ENCODE measurements at regions of chr3 and their contacts with region 1.

Region 1: DNA sequence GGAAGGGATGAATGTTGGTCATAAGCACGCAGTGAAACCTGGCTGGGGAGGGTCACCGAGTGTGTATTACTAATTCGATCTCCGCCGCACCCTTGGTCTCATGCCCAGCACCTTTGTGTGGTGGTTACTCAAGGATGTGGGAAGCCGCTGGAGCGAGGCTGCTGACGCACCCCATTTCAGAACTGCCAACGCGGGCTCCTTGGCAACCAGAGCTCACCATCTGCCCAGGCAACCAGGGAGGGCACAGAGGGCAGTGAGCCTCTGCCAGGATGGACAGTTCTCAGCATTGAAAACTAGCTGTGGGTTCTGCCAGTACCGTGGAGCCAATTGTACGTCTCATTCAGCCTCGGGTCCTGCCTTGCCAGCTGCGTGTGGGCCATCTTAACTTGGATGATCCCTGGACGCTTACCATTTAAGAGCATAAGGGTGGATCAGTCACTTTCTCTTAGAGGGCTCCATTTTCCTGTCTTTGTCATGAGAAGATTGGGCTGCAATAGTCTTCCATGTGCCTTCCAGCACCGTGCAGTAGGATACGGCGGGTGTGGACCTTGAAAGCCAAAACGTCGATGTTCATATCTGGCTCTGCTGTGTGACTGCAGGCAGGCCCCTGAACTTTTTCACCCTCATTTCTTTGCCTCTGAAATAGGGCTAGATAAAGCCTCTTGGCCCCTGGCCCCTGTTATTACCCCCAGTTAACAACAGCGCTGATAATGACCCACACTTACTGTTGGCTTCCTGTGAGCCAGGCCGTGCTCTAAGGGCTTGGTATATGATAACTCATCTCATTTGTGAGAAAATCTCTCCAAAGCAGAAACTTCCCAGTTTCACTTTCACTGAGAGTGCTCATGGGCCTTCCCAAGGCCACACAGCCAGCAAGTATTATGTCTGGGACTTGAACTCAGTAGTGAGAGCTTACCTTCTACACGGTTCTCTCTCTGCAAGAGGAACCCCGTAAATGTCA is 238.8 kb downstream of the OPA1 start:
- DNase-seq: no peak
- ATAC-seq: no peak
- H3K4me3 ChIP-seq: no peak overlapping the region
- H3K27ac ChIP-seq: no peak overlapping the region
- H3K4me1 ChIP-seq: peaks cover 45% of the 10 kb centered on the region
- H3K27me3 ChIP-seq: no peaks in the 10 kb centered on the region
- CTCF ChIP-seq: no peak

Region 2: DNA sequence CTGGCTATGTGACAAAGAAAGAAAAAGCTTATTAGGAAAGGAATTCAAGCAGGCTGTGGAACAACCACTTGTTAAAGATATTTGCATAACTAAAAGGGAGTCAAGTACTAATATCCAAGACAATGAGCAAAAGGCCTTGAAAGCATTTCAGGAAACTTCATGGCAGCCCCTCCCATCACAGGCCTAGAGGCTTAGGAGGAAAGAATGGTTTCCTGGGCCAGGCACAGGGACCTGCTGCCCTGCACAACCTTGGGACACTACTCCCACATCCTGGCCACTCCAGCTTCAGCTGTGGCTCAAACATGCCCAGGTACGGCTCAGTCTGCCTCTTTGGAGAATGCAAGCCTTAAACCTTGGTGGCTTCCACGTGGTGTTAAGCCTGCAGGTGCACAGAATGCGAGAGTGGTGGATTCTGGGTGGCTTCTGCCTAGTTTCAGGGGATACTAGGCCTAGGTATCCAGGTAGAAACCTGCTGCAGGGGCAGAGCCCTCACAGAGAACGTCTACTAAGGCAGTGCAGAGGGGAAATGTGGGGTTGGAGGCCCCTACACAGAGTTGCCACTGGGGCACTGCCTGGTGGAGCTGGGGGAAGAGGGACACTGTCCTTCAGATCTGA is 117.1 kb before region 1 on chr3:
- CTCF ChIA-PET with region 1: no interaction called
- POLR2A ChIA-PET with region 1: interaction called, 10 read pairs
- intact Hi-C with region 1: no loop called
- DNase-seq: no peak
- ATAC-seq: no peak
- H3K4me3 ChIP-seq: no peak overlapping the region
- H3K27ac ChIP-seq: no peak overlapping the region
- H3K4me1 ChIP-seq: no peaks in the 10 kb centered on the region
- H3K27me3 ChIP-seq: no peaks in the 10 kb centered on the region
- CTCF ChIP-seq: no peak